ENCODE measurements at regions of chr11 and their contacts with region 1.

Region 1: GRCh38 chr11:10792398-10792975 is 16.2 kb downstream of the EIF4G2 start:
- H3K4me3 ChIP-seq: no peak overlapping the region
- H3K27ac ChIP-seq: no peak overlapping the region
- H3K4me1 ChIP-seq: no peaks in the 10 kb centered on the region
- CTCF ChIP-seq: peak; percentile 90

Region 2: GRCh38 chr11:10803676-10804075 is 11.2 kb after region 1 on chr11:
- CTCF ChIA-PET with region 1: interaction called, 29 read pairs
- POLR2A ChIA-PET with region 1: interaction called, 95 read pairs
- H3K4me3 ChIP-seq: no peak overlapping the region
- H3K27ac ChIP-seq: no peak overlapping the region
- H3K4me1 ChIP-seq: no peaks in the 10 kb centered on the region
- CTCF ChIP-seq: no peak

Region 3: GRCh38 chr11:10824888-10825287 is 32.4 kb after region 1 on chr11:
- CTCF ChIA-PET with region 1: no interaction called
- POLR2A ChIA-PET with region 1: no interaction called
- H3K4me3 ChIP-seq: no peak overlapping the region
- H3K27ac ChIP-seq: no peak overlapping the region
- H3K4me1 ChIP-seq: no peaks in the 10 kb centered on the region
- CTCF ChIP-seq: no peak

Region 4: DNA sequence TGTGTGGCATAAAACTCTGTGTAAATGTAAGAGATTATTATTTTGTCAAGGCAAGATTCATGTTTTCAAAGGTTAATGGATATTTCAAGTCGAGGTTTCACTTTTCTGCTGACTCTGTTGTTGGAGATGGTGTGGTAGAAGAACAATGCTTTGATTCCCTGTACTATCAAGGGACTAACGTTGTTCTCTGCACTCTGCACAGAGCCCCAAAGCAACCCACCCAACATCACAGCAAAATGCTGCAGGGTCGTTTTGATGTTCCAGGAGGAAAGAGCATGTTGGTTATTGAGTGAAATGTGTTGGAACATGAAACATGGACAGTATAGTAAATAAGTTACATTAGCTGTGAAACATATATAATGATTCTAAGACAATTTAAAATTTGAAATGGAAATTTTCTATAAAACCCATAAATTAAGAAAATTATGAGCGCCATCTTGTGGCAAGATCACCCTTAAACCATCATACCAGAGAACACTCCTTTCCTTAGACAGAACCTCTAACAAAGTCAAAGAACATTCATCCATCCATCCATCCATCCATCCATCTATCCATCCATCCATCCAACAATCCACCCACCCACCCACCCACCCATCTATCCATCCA is 229.7 kb after region 1 on chr11:
- CTCF ChIA-PET with region 1: interaction called, 97 read pairs
- POLR2A ChIA-PET with region 1: interaction called, 5 read pairs
- H3K4me3 ChIP-seq: no peak overlapping the region
- H3K27ac ChIP-seq: no peak overlapping the region
- H3K4me1 ChIP-seq: no peaks in the 10 kb centered on the region
- CTCF ChIP-seq: no peak

Measured in HEK293 (cell line).